Activated B cell treated with CpG ODN at 0.5 μM for 24 hours (primary cell): ENCODE measurements at regions of chr3 and their contacts with region 1.

Region 1: GRCh38 chr3:185937689-185938463 is at the start of gene TRA2B:
- DNase-seq: peak; percentile 96
- ATAC-seq: peak; percentile 87
- H3K4me3 Mint-ChIP-seq: peak within 1 kb of the TSS; percentile 99
- H3K27ac Mint-ChIP-seq: peak within 1 kb of the TSS; percentile 100
- H3K4me1 Mint-ChIP-seq: peaks cover 45% of the 10 kb centered on the region
- H3K27me3 Mint-ChIP-seq: no peaks in the 10 kb centered on the region
- CTCF ChIP-seq: no peak
- total RNA-seq, gene TRA2B: 213 and 219 TPM in 2 replicates

Region 2: DNA sequence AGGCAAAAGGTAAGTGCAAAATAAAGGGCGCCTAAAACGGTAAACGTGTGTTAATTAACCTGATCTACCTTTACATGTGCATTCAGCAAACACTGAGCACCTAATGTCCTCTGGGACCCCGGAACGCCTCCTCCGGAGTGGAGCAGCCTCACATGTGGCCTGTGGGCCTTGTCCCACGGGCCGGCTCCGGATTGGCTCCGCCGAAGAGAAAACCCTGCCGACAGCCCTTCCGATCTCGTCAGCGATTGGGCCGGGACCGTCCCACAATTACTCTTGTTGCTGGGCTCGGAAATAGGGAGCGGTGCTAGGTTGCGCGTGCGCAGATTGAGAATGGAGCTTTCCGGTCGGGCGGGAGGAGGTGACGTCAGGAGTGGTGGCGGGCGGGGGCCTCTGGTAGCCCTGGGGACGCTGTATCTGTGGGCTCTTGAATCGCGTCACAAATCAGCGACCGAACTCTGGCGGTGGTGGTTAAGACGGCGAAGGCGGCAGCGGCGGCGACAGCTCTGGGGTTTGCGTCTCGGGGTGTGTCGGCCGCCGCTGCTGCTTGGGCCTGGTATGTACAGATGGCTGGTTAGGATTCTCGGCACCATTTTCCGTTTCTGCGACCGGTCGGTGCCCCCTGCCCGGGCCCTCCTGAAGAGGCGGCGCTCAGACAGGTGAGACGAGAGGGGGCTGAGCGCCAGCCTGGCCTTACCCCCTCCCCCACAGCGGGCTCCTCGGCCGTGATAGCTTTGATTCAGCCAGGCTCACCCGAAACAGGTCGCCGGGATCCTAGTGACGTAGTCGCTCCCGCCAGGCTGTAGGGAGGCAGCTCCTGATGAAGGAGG is 351.8 kb before region 1 on chr3 and contains the start of gene SENP2:
- CTCF ChIA-PET with region 1: no interaction called
- POLR2A ChIA-PET with region 1: interaction called, 6 read pairs
- intact Hi-C with region 1: loop called (anchors 2 kb)
- DNase-seq: peak; percentile 98
- ATAC-seq: peak; percentile 95
- H3K4me3 Mint-ChIP-seq: peak within 1 kb of the TSS; percentile 97
- H3K27ac Mint-ChIP-seq: peak within 1 kb of the TSS; percentile 97
- H3K4me1 Mint-ChIP-seq: peaks cover 39% of the 10 kb centered on the region
- H3K27me3 Mint-ChIP-seq: no peaks in the 10 kb centered on the region
- CTCF ChIP-seq: no peak
- total RNA-seq, gene SENP2: 42.2 and 47.1 TPM in 2 replicates

Region 3: DNA sequence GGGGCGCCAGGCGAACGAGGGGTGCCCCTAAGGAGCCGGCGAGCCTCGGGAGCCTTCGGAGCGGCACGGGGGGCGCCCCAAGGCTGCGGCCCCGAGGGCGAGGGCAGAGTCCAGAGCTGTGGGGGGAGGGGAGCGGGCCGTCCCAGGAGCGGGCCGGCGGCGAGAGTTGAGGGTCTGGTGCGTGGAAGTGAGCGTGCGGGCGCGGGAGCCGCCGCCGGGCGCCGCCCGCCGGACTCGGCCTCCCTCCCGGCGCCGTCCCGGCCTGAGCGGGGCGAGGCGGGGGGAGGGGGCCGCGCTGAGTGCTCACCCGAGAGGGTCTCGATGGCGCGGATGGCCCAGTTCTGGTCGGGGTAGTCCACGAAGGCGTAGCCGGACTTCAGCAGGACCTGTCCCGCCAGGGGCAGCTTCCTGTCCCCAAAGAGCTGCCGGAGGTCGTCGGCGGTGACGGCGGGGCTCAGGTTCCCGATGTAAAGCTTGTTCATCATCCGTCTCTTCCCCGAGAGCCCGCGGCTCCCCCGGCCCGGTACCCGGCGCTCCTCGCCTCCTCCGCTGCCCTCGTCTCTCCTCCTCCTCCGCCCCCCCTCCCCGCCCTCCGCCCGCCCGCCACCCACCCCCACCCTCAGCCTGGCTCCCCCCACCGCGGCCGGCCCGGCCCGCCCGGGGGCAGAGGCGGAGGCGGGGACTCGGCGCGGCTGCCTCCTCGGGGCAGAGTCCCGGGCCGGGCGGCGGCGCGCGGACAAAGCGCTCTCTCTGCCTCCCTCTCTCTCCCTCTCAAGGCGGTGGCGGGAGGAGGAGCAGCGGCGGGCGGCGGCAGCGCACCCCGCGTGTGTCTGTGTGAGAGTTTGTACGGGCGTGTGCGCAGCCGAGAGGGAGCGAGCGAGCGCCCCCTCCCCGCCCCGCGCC is 113.1 kb before region 1 on chr3 and contains the start of gene IGF2BP2:
- CTCF ChIA-PET with region 1: no interaction called
- POLR2A ChIA-PET with region 1: no interaction called
- intact Hi-C with region 1: loop called (anchors 5 kb)
- DNase-seq: peak; percentile 44
- ATAC-seq: peak; percentile 67
- H3K4me3 Mint-ChIP-seq: peak within 1 kb of the TSS; percentile 86
- H3K27ac Mint-ChIP-seq: no peak within 1 kb of the TSS
- H3K4me1 Mint-ChIP-seq: peaks cover 16% of the 10 kb centered on the region
- H3K27me3 Mint-ChIP-seq: peaks cover 49% of the 10 kb centered on the region
- CTCF ChIP-seq: no peak
- total RNA-seq, gene IGF2BP2: 0.51 and 0.69 TPM in 2 replicates

Region 4: DNA sequence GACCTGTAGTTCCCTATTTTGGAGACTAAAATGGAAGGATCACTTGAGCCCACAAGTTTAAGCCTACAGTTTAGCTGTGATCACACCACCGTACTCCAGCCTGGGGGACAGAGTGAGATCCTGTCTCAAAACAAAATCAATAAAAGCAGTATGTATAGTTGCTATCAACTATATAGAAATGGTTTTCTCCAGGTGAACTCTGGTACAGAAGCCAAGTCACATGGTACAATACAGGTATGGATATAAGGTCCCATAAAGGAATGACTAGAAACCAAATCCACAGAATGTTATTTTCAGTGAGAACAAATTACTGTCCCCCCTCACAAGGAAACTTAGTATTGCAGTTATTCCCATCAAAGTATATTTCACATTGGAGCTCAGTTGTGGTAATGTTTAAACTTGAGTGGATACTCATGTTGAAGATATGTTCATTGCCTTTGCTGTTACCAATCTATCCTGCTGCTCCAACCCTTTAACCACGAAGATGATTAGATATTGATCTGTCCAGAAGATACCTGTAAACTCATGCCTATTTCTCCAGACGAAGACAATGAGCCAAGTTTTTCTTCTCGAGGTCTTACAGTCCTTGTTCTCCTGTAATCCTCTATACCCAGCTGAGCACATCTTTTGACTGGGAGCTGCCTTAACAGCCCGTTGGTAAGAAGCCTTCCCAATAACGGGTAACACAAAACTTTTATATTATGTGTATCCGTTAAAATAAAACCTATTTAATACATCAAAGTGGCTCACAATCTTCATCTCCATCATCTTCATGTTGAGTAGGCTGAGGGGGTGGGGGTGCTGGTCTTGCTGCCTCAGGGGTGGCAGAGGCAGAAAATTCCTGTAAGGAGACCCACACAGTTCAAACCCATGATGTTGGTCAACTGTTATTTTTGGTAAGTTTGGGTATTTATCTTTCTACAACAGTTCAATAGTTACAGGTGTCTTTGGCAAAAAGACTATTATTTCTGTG is 24.7 kb before region 1 on chr3:
- CTCF ChIA-PET with region 1: interaction called, 9 read pairs
- POLR2A ChIA-PET with region 1: interaction called, 24 read pairs
- intact Hi-C with region 1: loop called (anchors 2 kb)
- DNase-seq: no peak
- ATAC-seq: peak; percentile 14
- H3K4me3 Mint-ChIP-seq: no peak overlapping the region
- H3K27ac Mint-ChIP-seq: no peak overlapping the region
- H3K4me1 Mint-ChIP-seq: no peaks in the 10 kb centered on the region
- H3K27me3 Mint-ChIP-seq: no peaks in the 10 kb centered on the region
- CTCF ChIP-seq: no peak

Region 5: GRCh38 chr3:186108941-186109865 is 171.3 kb after region 1 on chr3 and contains the start of gene ETV5:
- CTCF ChIA-PET with region 1: no interaction called
- POLR2A ChIA-PET with region 1: interaction called, 22 read pairs
- intact Hi-C with region 1: loop called (anchors 1 kb)
- DNase-seq: peak; percentile 85
- ATAC-seq: peak; percentile 95
- H3K4me3 Mint-ChIP-seq: peak within 1 kb of the TSS; percentile 95
- H3K27ac Mint-ChIP-seq: peak within 1 kb of the TSS; percentile 80
- H3K4me1 Mint-ChIP-seq: peaks cover 35% of the 10 kb centered on the region
- H3K27me3 Mint-ChIP-seq: peaks cover 42% of the 10 kb centered on the region
- CTCF ChIP-seq: no peak
- total RNA-seq, gene ETV5: 0.49 and 0.89 TPM in 2 replicates

Region 6: DNA sequence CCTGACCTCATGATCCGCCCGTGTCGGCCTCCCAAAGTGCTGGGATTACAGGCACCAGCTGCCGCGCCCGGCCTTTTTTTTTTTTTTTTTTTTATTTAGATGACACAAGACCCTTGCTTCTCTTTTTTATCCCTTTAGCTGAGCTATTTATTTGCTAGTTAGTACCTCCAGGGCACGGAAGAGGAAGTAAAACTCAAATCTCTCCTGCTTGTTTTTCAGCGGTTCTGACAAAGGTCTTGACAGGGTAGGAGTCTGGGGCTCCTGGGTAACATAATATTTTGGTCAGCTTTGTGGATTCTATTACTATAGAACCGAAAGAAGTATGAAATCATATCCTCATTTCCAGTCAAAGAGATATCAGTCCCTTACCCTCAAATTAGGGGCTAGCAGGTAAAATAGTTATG is 215.0 kb after region 1 on chr3:
- CTCF ChIA-PET with region 1: no interaction called
- POLR2A ChIA-PET with region 1: no interaction called
- intact Hi-C with region 1: loop called (anchors 5 kb)
- DNase-seq: no peak
- ATAC-seq: peak; percentile 92
- H3K4me3 Mint-ChIP-seq: peak overlapping the region; percentile 67
- H3K27ac Mint-ChIP-seq: peak overlapping the region; percentile 87
- H3K4me1 Mint-ChIP-seq: peaks cover 30% of the 10 kb centered on the region
- H3K27me3 Mint-ChIP-seq: no peaks in the 10 kb centered on the region
- CTCF ChIP-seq: no peak

Region 7: GRCh38 chr3:187025656-187026316 is 1087.9 kb after region 1 on chr3:
- CTCF ChIA-PET with region 1: no interaction called
- POLR2A ChIA-PET with region 1: interaction called, 3 read pairs
- intact Hi-C with region 1: loop called (anchors 10 kb)
- DNase-seq: no peak
- ATAC-seq: peak; percentile 51
- H3K4me3 Mint-ChIP-seq: peak overlapping the region; percentile 84
- H3K27ac Mint-ChIP-seq: peak overlapping the region; percentile 93
- H3K4me1 Mint-ChIP-seq: peaks cover 93% of the 10 kb centered on the region
- H3K27me3 Mint-ChIP-seq: no peaks in the 10 kb centered on the region
- CTCF ChIP-seq: no peak